Vagina (tissue), 2 donors: ENCODE measurements at regions of chr3 and their contacts with region 1.

Region 1: DNA sequence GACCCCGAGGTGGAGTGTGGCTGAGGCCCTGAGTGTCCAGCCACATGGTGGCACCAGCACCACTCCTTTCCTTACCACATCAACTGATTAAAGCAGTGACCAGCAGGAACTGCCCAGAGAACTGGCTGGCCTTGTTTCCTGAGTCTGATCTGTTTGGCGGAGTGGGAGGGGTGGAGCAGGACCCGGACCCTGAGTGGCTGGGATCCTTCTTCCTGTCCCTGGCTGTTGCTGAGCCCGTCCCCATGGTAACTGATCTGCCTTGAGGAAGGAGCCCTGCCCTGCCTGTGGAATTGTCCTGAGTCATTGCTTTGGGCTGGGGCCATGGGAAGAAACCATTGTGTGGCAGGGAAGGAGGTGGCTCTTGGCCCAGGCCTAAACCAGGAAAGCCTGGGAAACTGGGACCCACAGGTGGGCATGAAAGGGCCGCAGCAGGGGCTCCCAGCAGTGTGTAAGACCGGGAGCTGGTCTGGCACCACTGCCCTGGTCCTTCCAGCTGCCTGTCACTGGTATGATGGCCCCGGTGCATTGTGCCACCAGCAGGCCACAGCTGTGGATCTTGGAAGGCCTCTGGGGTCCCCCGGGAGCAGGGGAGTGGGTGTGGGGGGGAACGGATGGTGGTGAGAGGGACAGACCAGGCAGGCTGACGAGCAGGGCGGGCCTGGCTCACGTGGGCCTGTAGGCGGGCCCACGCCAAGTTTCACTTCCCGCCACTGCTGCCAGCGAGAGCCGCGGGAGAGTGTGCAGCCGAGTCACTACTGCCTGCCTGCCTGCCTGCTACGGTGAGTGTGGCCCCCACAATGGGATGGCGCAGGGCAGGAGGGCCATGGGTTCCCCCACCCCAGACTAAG is 19.2 kb downstream of the ATRIP start:
- DNase-seq: peak in 1 of 2 donors; percentile 100
- H3K4me3 ChIP-seq: peak overlapping the region; percentile 46 to 60
- H3K27ac ChIP-seq: peak overlapping the region; percentile 100
- H3K4me1 ChIP-seq: peaks cover 59% of the 10 kb centered on the region
- H3K27me3 ChIP-seq: no peaks in the 10 kb centered on the region
- CTCF ChIP-seq: peak; percentile 68 to 96 (median 79)
- POLR2A ChIP-seq: peak in 1 of 2 donors; percentile 83

Region 2: GRCh38 chr3:48504051-48504946 is 38.5 kb after region 1 on chr3 and contains the start of gene SHISA5:
- intact Hi-C with region 1: loop called (anchors 2 kb)
- DNase-seq: peak in 1 of 2 donors; percentile 49
- H3K4me3 ChIP-seq: peak within 1 kb of the TSS; percentile 61 to 78
- H3K27ac ChIP-seq: peak within 1 kb of the TSS; percentile 92
- H3K4me1 ChIP-seq: peaks cover 59% of the 10 kb centered on the region
- H3K27me3 ChIP-seq: no peaks in the 10 kb centered on the region
- CTCF ChIP-seq: no peak
- POLR2A ChIP-seq: peak in 1 of 2 donors; percentile 33
- total RNA-seq, gene SHISA5: 133 TPM

Region 3: DNA sequence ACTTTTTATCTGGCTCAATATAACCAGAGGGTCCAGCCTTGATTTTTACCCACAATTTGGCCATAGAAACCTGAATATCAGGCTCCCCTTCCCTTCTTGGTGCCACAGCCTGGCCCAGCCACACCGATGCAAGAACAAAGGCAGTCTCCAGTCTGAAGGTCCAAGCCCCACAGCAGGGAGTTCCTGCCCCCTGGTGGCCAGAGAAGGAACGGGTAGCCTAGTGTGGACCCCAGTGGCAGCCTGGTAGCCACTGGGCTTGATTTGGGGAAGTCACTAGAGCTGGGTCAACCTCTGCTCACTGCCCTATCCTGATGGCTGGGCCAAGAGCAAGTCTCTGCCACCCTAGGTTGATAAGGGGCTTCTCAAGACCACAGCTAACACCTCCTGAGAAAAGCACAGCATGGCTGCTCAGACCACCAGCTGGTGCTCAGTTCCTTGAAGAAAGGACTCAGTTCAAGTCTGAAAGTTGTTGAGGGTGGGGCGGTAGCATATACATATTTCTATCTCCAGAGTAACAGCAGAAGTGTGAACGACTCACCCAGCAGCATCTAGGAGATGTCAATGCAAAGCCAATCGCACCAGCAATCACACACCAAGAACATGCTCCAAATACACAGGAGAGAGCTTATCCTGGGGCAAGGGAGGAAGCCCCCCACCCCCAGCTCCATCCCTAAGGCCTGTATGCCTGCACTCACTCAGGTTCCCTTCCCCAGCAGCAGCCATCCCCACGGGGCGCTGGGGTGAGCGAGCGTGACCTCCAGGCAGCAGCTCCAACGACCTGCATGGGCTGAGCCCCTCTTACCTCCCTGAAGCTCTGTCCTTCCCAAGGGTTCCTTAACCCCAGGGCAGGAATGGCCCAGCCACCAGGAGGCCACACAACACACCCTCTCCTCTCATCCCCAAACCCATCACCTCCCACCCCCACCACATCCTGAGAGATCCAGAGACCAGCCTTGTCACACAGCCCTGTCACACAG is 83.3 kb after region 1 on chr3:
- intact Hi-C with region 1: loop called (anchors 2 kb)
- DNase-seq: no peak
- H3K4me3 ChIP-seq: no peak overlapping the region
- H3K27ac ChIP-seq: no peak overlapping the region
- H3K4me1 ChIP-seq: peaks cover 7% of the 10 kb centered on the region
- H3K27me3 ChIP-seq: no peaks in the 10 kb centered on the region
- CTCF ChIP-seq: peak; percentile 92 to 94 (median 93)
- POLR2A ChIP-seq: no peak